Common myeloid progenitor, CD34-positive (primary cell): ENCODE measurements at regions of chr14 and their contacts with region 1.

Region 1: DNA sequence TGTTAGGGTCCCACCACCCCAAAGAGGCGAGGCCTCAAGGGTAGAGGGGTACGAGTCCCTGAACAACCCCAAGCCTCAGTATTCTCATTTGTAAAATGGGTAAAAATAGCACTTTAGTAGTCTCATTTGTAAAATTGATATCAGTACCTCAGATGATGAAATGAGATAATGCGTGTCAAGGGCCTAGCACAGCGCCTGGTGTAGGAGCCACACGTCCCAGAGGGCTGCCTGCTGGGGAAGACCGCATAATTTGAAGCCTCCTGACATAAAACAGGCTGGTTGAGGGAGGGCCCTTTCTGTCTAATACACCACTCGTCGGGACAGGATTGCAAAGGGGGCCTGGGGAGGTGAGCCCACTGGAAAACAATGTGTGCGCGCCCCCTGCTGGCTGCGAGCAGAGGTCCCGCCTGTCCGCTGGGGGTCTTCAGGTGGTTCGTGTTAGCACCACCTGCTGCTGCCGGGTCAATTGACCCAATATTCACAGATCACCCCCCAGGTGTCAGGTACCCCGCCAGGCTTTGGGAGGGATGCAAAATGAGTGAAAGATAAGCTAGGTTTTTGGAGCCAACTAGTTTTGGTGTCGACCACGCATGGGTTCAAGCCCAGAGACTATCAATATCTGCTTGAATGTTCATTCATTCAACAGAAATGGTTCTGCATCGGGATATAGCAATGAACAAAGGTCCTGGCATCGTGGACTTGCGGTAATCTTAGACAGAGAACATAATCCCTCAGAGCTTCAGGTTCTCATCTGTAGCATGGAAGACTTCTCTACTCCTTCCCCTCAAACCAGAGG is 24.7 kb upstream of the IRF2BPL start:
- DNase-seq: peak; percentile 87 to 89 (median 89)
- H3K4me3 ChIP-seq: no peak overlapping the region
- H3K27ac ChIP-seq: no peak overlapping the region
- H3K4me1 ChIP-seq: peaks cover 0 to 22% (median 11%) of the 10 kb centered on the region in 4 experiments
- H3K27me3 ChIP-seq: no peaks in the 10 kb centered on the region

Region 2: DNA sequence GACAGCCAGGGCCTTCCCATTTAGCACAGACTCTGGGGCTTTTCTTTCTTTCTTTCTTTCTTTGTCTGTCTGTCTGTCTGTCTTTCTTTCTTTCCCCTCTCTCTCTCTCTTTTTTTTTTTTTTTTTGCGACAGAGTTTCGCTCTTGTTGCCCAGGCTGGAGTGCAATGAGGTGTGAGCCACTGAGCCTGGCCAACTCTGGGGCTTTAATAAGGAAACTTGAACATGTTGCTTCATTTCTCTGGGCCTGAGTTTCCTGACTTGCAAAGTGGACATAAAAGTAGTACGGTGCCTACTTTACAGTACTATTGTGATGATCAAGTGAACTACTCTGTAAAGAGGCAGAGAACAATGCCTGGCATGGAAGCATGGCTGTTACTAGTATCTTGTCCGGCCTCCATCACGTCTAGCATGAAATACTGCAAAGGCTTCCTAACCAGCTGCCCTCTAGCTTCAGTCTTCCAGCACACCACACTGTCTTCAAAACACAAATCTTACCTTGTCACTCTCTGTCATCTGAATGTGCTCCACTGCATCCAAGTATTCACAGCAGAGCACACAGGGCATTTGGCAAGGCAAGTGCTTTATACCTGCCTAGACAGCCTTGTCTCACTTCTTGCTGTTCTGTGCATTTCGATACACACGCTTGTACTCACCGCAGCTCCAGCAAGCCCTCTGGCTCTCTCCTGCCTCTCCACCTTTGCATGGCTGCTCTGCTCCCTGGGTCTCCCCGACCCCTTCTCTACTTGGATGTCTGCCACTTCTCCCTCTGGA is 121.4 kb before region 1 on chr14:
- CTCF ChIA-PET with region 1: interaction called, 12 read pairs
- POLR2A ChIA-PET with region 1: no interaction called
- DNase-seq: no peak
- H3K4me3 ChIP-seq: no peak overlapping the region
- H3K27ac ChIP-seq: no peak overlapping the region
- H3K4me1 ChIP-seq: peaks cover 12 to 53% (median 33%) of the 10 kb centered on the region in 4 experiments
- H3K27me3 ChIP-seq: no peaks in the 10 kb centered on the region

Region 3: GRCh38 chr14:76947078-76947837 is 106.0 kb before region 1 on chr14:
- CTCF ChIA-PET with region 1: interaction called, 15 read pairs
- POLR2A ChIA-PET with region 1: interaction called, 3 read pairs
- DNase-seq: peak; percentile 83 to 90 (median 88)
- H3K4me3 ChIP-seq: peak overlapping the region in 2 of 7 experiments; percentile 12 to 45
- H3K27ac ChIP-seq: no peak overlapping the region
- H3K4me1 ChIP-seq: peaks cover 3 to 37% (median 16%) of the 10 kb centered on the region in 4 experiments
- H3K27me3 ChIP-seq: no peaks in the 10 kb centered on the region

Region 4: DNA sequence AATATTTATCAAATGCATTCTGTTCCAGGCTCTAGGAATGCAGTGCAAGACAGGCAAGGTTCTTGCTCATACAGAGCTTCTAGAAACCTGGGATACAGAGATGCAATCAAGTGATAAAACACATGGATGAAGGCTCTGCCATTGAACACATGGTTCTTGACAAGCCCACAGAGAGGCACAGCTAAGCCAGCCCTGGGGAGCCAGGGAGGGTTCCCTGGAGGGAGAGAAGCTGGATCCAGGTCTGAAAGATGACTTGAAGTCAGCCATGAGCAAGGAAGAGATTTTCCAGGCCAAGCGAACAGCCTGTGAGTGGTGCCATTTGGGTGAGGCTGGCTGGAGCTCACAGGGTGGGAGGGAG is 91.0 kb before region 1 on chr14:
- CTCF ChIA-PET with region 1: interaction called, 14 read pairs
- POLR2A ChIA-PET with region 1: no interaction called
- DNase-seq: no peak
- H3K4me3 ChIP-seq: peak overlapping the region in 6 of 7 experiments; percentile 38 to 72 (median 62)
- H3K27ac ChIP-seq: peak overlapping the region in 1 of 2 experiments; percentile 54
- H3K4me1 ChIP-seq: peaks cover 5 to 61% (median 41%) of the 10 kb centered on the region in 4 experiments
- H3K27me3 ChIP-seq: no peaks in the 10 kb centered on the region

Region 5: GRCh38 chr14:77040059-77040740 is 13.0 kb before region 1 on chr14:
- CTCF ChIA-PET with region 1: interaction called, 20 read pairs
- POLR2A ChIA-PET with region 1: no interaction called
- DNase-seq: peak; percentile 99 to 100 (median 100)
- H3K4me3 ChIP-seq: peak overlapping the region in 6 of 7 experiments; percentile 26 to 70 (median 55)
- H3K27ac ChIP-seq: peak overlapping the region; percentile 91 to 95
- H3K4me1 ChIP-seq: peaks cover 43 to 97% (median 78%) of the 10 kb centered on the region in 4 experiments
- H3K27me3 ChIP-seq: no peaks in the 10 kb centered on the region